ENCODE measurements at regions of chr5 and their contacts with region 1.

Region 1: DNA sequence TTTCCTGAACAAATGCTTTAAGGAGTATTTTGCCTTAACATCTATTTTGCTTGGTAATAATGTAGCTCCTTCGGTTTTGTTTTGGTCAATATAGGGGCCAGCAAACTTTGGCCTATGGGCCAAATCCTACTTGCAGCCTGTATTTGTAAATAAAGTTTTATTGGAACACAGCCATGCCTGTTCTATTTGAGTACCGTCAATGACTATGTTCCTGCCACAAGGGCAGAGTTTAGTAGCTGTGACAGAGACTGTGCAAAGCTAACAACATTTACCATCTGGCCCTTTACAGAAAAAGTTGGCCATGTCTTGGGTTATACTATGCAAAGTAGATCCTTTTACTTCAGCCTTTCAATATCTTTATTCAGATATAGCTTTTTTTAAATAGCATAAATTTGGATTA is 113.4 kb downstream of the NR3C1 start:
- DNase-seq: no peak
- CTCF ChIP-seq: no peak

Region 2: GRCh38 chr5:142816531-142817430 is 473.3 kb before region 1 on chr5:
- CTCF ChIA-PET with region 1: no interaction called
- POLR2A ChIA-PET with region 1: no interaction called
- DNase-seq: no peak
- CTCF ChIP-seq: no peak

Region 3: GRCh38 chr5:143182901-143183820 is 107.0 kb before region 1 on chr5:
- CTCF ChIA-PET with region 1: no interaction called
- POLR2A ChIA-PET with region 1: no interaction called
- DNase-seq: peak; percentile 56
- CTCF ChIP-seq: no peak

Region 4: GRCh38 chr5:143279698-143280097 is 10.4 kb before region 1 on chr5:
- CTCF ChIA-PET with region 1: interaction called, 42 read pairs
- POLR2A ChIA-PET with region 1: no interaction called
- DNase-seq: no peak
- CTCF ChIP-seq: no peak

Measured in GM10248 (cell line).